ENCODE measurements at regions of chr5 and their contacts with region 1.

Region 1: DNA sequence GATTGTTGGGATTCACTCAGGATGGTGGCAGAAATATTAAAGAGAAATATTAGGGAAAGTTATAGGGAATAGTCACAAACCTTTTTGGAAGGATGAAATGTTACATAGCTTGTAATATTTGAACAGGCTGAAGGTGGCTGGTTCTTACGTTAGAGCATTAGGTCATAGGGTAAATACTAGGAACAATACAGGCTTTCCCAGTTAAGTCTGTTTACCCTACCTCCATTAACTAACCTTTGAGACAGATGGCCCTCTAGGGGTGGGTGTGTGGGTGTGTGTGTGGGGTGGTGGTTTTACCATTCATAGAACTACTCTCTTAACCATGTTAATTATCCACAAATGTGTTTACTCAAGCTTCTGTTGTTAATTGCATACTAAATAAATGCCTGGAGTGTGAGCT is 94.3 kb upstream of the STK32A start:
- DNase-seq: peak; percentile 46 to 47
- H3K4me3 ChIP-seq: no peak overlapping the region
- H3K4me3 Mint-ChIP-seq: peak overlapping the region; percentile 5
- H3K27ac Mint-ChIP-seq: peak overlapping the region; percentile 68
- H3K4me1 ChIP-seq: peaks cover 23% of the 10 kb centered on the region
- H3K4me1 Mint-ChIP-seq: peaks cover 23% of the 10 kb centered on the region
- H3K27me3 ChIP-seq: no peaks in the 10 kb centered on the region
- H3K27me3 Mint-ChIP-seq: no peaks in the 10 kb centered on the region
- CTCF ChIP-seq: no peak

Region 2: GRCh38 chr5:146680830-146681572 is 459.6 kb before region 1 on chr5:
- CTCF ChIA-PET with region 1: no interaction called
- POLR2A ChIA-PET with region 1: no interaction called
- intact Hi-C with region 1: no loop called
- DNase-seq: no peak
- H3K4me3 ChIP-seq: no peak overlapping the region
- H3K4me3 Mint-ChIP-seq: no peak overlapping the region
- H3K27ac Mint-ChIP-seq: no peak overlapping the region
- H3K4me1 ChIP-seq: no peaks in the 10 kb centered on the region
- H3K4me1 Mint-ChIP-seq: no peaks in the 10 kb centered on the region
- H3K27me3 ChIP-seq: no peaks in the 10 kb centered on the region
- H3K27me3 Mint-ChIP-seq: peaks cover 4% of the 10 kb centered on the region
- CTCF ChIP-seq: no peak

Region 3: GRCh38 chr5:146993876-146994530 is 146.6 kb before region 1 on chr5:
- CTCF ChIA-PET with region 1: no interaction called
- POLR2A ChIA-PET with region 1: no interaction called
- intact Hi-C with region 1: no loop called
- DNase-seq: no peak
- H3K4me3 ChIP-seq: no peak overlapping the region
- H3K4me3 Mint-ChIP-seq: no peak overlapping the region
- H3K27ac Mint-ChIP-seq: no peak overlapping the region
- H3K4me1 ChIP-seq: peaks cover 10% of the 10 kb centered on the region; the same call in 1 of the 2 replicates
- H3K4me1 Mint-ChIP-seq: peaks cover 7% of the 10 kb centered on the region
- H3K27me3 ChIP-seq: no peaks in the 10 kb centered on the region
- H3K27me3 Mint-ChIP-seq: no peaks in the 10 kb centered on the region
- CTCF ChIP-seq: no peak

Region 4: GRCh38 chr5:147154809-147155208 is 14.3 kb after region 1 on chr5:
- CTCF ChIA-PET with region 1: no interaction called
- POLR2A ChIA-PET with region 1: no interaction called
- intact Hi-C with region 1: loop called (anchors 2 kb)
- DNase-seq: no peak
- H3K4me3 ChIP-seq: no peak overlapping the region
- H3K4me3 Mint-ChIP-seq: no peak overlapping the region
- H3K27ac Mint-ChIP-seq: no peak overlapping the region
- H3K4me1 ChIP-seq: no peaks in the 10 kb centered on the region
- H3K4me1 Mint-ChIP-seq: no peaks in the 10 kb centered on the region
- H3K27me3 ChIP-seq: no peaks in the 10 kb centered on the region
- H3K27me3 Mint-ChIP-seq: no peaks in the 10 kb centered on the region
- CTCF ChIP-seq: no peak

Region 5: GRCh38 chr5:147203213-147203612 is 62.7 kb after region 1 on chr5:
- CTCF ChIA-PET with region 1: no interaction called
- POLR2A ChIA-PET with region 1: no interaction called
- intact Hi-C with region 1: no loop called
- DNase-seq: no peak
- H3K4me3 ChIP-seq: no peak overlapping the region
- H3K4me3 Mint-ChIP-seq: no peak overlapping the region
- H3K27ac Mint-ChIP-seq: no peak overlapping the region
- H3K4me1 ChIP-seq: 0 out of 2 replicates have a peak, but pooled peaks cover 10% of the 10 kb centered on the region
- H3K4me1 Mint-ChIP-seq: no peaks in the 10 kb centered on the region
- H3K27me3 ChIP-seq: no peaks in the 10 kb centered on the region
- H3K27me3 Mint-ChIP-seq: no peaks in the 10 kb centered on the region
- CTCF ChIP-seq: no peak

Measured in Caco-2 (cell line).